Calu3 (cell line): ENCODE measurements at regions of chr5 and their contacts with region 1.

Region 1: GRCh38 chr5:176660860-176661641 is 13.8 kb downstream of the TSPAN17 start:
- DNase-seq: peak; percentile 88
- H3K4me3 Mint-ChIP-seq: no peak overlapping the region
- H3K27ac Mint-ChIP-seq: no peak overlapping the region
- H3K4me1 Mint-ChIP-seq: peaks cover 19% of the 10 kb centered on the region
- H3K27me3 Mint-ChIP-seq: peaks cover 27% of the 10 kb centered on the region
- CTCF ChIP-seq: peak; percentile 99

Region 2: DNA sequence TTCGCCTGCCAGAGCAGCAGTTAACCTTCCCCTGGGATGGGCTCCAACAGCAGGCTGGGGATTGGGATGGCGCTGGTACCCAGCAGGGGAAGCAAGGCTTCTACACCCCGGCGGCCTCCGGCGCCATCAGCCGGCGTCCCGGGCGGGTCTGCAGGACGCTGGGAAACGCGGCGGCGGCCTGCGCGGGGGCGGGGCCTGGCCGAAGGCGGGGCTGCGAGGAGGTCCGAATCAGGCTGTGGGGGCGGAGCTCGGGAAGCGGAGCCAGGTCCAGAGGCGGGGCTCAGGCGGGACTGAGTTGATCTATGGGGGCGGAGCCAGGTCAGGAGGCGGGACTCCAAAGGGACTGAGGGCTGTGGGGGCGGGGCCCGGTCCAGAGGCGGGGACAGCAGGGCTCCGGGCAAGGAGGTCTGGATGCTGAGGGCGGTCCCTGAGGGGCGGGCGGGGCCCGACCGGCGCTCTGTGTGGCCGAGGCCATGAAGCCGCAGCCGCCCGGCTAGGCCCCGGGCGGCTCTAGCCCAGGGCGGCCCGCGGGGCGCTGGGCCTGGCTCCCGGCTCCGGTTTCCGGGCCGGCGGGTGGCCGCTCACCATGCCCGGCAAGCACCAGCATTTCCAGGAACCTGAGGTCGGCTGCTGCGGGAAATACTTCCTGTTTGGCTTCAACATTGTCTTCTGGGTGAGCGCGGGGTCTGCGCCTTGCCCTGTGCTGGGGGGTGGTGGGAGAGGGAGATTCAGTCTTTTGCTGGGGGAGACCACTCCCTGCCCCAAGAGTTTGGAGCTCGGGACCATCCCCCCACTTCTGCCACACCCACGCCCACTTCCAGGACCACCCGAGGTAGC is 13.8 kb before region 1 on chr5 and contains the start of gene TSPAN17:
- CTCF ChIA-PET with region 1: interaction called, 12 read pairs
- intact Hi-C with region 1: no loop called
- DNase-seq: peak; percentile 100
- H3K4me3 Mint-ChIP-seq: peak within 1 kb of the TSS; percentile 74
- H3K27ac Mint-ChIP-seq: peak within 1 kb of the TSS; percentile 30
- H3K4me1 Mint-ChIP-seq: peaks cover 19% of the 10 kb centered on the region
- H3K27me3 Mint-ChIP-seq: no peaks in the 10 kb centered on the region
- CTCF ChIP-seq: no peak
- total RNA-seq, gene TSPAN17: 66.3 and 67.7 TPM in 2 replicates

Region 3: DNA sequence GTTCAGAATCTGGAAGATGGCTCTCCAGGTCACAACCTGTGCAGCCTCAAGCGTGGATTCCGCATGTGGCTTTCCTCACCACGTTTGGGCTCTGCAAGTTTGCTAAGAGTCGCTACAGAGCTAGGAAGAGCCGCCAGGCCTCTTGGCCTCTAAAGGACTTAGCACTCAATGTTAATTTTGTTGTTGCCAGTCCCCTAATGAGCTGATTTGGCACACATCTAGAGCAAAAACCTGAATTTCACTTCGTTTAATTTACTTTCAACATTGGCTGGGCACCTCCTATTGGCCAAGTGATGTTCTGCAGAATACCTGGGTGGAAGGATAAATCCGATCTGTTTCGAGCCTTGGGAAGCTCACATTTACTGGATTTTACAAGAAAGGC is 83.5 kb after region 1 on chr5:
- CTCF ChIA-PET with region 1: interaction called, 18 read pairs
- intact Hi-C with region 1: loop called (anchors 2 kb)
- DNase-seq: no peak
- H3K4me3 Mint-ChIP-seq: no peak overlapping the region
- H3K27ac Mint-ChIP-seq: no peak overlapping the region
- H3K4me1 Mint-ChIP-seq: no peaks in the 10 kb centered on the region
- H3K27me3 Mint-ChIP-seq: peaks cover 100% of the 10 kb centered on the region
- CTCF ChIP-seq: peak; percentile 20

Region 4: GRCh38 chr5:176822041-176822792 is 161.2 kb after region 1 on chr5:
- CTCF ChIA-PET with region 1: interaction called, 40 read pairs
- intact Hi-C with region 1: no loop called
- DNase-seq: peak; percentile 95
- H3K4me3 Mint-ChIP-seq: peak overlapping the region; percentile 86
- H3K27ac Mint-ChIP-seq: peak overlapping the region; percentile 97
- H3K4me1 Mint-ChIP-seq: peaks cover 77% of the 10 kb centered on the region
- H3K27me3 Mint-ChIP-seq: no peaks in the 10 kb centered on the region
- CTCF ChIP-seq: no peak

Region 5: GRCh38 chr5:176959051-176959450 is 298.0 kb after region 1 on chr5:
- CTCF ChIA-PET with region 1: interaction called, 8 read pairs
- intact Hi-C with region 1: loop called (anchors 2 kb)
- DNase-seq: no peak
- H3K4me3 Mint-ChIP-seq: no peak overlapping the region
- H3K27ac Mint-ChIP-seq: no peak overlapping the region
- H3K4me1 Mint-ChIP-seq: no peaks in the 10 kb centered on the region
- H3K27me3 Mint-ChIP-seq: no peaks in the 10 kb centered on the region
- CTCF ChIP-seq: peak; percentile 24

Region 6: GRCh38 chr5:177113566-177114424 is 452.7 kb after region 1 on chr5:
- CTCF ChIA-PET with region 1: interaction called, 33 read pairs
- intact Hi-C with region 1: loop called (anchors 2 kb)
- DNase-seq: peak; percentile 85
- H3K4me3 Mint-ChIP-seq: no peak overlapping the region
- H3K27ac Mint-ChIP-seq: no peak overlapping the region
- H3K4me1 Mint-ChIP-seq: peaks cover 20% of the 10 kb centered on the region
- H3K27me3 Mint-ChIP-seq: no peaks in the 10 kb centered on the region
- CTCF ChIP-seq: peak; percentile 98